ENCODE measurements at regions of chr9 and their contacts with region 1.

Region 1: DNA sequence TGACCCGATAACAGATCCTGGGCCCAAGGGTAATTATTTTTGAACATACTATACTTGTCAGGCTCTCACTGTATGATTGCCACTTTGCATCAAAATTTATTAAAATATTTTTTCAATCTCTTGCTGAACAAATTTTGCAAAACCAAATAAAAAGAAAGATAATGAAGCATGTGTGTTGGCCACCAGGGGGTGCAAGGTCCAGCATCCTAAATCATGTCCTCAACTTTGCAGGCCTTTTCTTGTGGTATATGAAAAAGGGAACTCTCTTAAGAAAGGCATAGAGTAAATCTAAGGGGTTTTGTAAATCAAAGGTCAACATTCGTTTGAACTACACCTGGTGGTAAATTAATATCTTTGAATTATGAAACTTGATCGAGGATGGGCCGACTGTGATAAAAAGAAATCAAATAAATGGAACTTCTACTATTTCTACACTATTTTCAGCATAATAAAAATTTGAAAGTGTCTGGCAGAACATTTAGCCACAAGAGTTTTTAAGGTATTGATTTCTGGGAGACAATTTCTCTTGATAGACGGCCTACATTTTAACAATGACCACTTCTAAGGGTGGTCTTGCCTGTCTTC is 676.5 kb downstream of the DMRTA1 start:
- DNase-seq: peak; percentile 5
- ATAC-seq: no peak
- H3K4me3 ChIP-seq: no peak overlapping the region
- H3K27ac ChIP-seq: no peak overlapping the region
- H3K4me1 ChIP-seq: no peaks in the 10 kb centered on the region
- H3K27me3 ChIP-seq: no peaks in the 10 kb centered on the region
- CTCF ChIP-seq: peak; percentile 15; the same call in 1 of the 2 replicates
- EP300 ChIP-seq: no peak
- POLR2A ChIP-seq: no peak
- RAD21 ChIP-seq: no peak

Region 2: GRCh38 chr9:23438299-23438907 is 315.3 kb after region 1 on chr9:
- CTCF ChIA-PET with region 1: no interaction called
- POLR2A ChIA-PET with region 1: no interaction called
- in situ Hi-C with region 1: no loop called
- intact Hi-C with region 1: loop called (anchors 2 kb)
- DNase-seq: peak; percentile 62
- ATAC-seq: peak; percentile 100
- H3K4me3 ChIP-seq: no peak overlapping the region
- H3K27ac ChIP-seq: no peak overlapping the region
- H3K4me1 ChIP-seq: peaks cover 17% of the 10 kb centered on the region
- H3K27me3 ChIP-seq: no peaks in the 10 kb centered on the region
- CTCF ChIP-seq: peak; percentile 26
- EP300 ChIP-seq: no peak
- POLR2A ChIP-seq: no peak
- RAD21 ChIP-seq: no peak

Region 3: DNA sequence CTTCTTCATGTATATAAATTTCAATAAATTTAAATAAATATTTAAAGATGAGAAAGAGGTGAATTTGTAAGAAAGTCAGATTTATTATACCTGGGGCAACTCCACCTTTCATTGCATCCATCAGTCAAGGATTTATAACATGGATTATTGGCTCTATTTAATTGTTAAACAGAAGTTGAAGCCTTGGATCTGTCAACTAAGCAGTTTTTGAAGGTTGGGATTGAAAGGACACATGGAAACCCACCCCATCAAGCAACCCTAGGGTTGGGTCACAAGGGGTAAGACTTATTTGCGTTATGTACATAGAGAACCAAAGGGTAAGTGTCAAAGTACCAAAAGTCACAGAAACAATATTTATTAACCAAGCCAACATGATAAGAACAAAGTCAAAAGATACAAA is 360.4 kb after region 1 on chr9:
- CTCF ChIA-PET with region 1: no interaction called
- POLR2A ChIA-PET with region 1: no interaction called
- in situ Hi-C with region 1: loop called (anchors 10 kb)
- intact Hi-C with region 1: no loop called
- DNase-seq: no peak
- ATAC-seq: no peak
- H3K4me3 ChIP-seq: no peak overlapping the region
- H3K27ac ChIP-seq: no peak overlapping the region
- H3K4me1 ChIP-seq: no peaks in the 10 kb centered on the region
- H3K27me3 ChIP-seq: no peaks in the 10 kb centered on the region; a peak in 1 of 5 replicates
- CTCF ChIP-seq: no peak
- EP300 ChIP-seq: no peak
- POLR2A ChIP-seq: no peak
- RAD21 ChIP-seq: no peak